MCF 10A (cell line): ENCODE measurements at regions of chr1 and their contacts with region 1.

Region 1: GRCh38 chr1:11979851-11980675 is at the start of gene MFN2:
- DNase-seq: peak; percentile 97
- H3K4me3 Mint-ChIP-seq: peak within 1 kb of the TSS; percentile 78
- H3K27ac Mint-ChIP-seq: peak within 1 kb of the TSS; percentile 99
- H3K4me1 Mint-ChIP-seq: peaks cover 29% of the 10 kb centered on the region
- H3K27me3 Mint-ChIP-seq: no peaks in the 10 kb centered on the region
- CTCF ChIP-seq: no peak
- total RNA-seq, gene MFN2: 95.6 and 105 TPM in 2 replicates

Region 2: DNA sequence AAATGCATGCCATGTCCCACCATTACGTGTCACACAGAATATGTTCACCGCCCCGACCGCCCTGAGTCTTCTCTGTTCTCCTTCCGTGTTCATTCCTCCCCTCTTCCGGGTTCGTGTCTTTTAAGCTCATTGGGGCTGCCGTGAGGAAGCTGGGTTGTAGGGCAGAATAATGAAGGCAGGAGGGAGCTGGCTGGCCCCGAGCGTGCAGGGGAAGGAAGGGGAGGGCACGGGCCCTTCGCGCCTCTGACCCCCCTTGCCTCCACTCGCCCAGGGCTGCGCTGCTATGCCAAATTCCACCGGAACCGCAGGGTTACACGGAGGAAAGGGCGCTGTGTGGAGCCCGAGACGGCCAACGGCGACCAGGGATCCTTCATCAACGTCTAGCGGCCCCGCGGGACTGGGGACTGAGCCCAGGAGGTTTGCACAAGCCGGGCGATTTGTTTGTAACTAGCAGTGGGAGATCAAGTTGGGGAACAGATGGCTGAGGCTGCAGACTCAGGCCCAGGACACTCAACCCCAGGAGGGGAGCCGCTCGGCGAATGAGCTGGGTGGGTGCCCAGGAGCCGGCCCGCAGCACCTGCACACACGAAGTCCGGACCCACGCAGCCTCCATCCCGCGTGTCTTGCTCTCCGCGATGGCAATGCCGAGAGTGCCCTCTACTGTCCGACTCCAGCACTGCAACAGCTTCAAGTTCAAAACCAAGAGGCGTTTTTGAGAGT is 260.6 kb before region 1 on chr1:
- CTCF ChIA-PET with region 1: no interaction called
- POLR2A ChIA-PET with region 1: no interaction called
- intact Hi-C with region 1: no loop called
- DNase-seq: peak; percentile 47
- H3K4me3 Mint-ChIP-seq: peak overlapping the region; percentile 53
- H3K27ac Mint-ChIP-seq: no peak overlapping the region
- H3K4me1 Mint-ChIP-seq: peaks cover 5% of the 10 kb centered on the region
- H3K27me3 Mint-ChIP-seq: no peaks in the 10 kb centered on the region
- CTCF ChIP-seq: peak; percentile 89

Region 3: DNA sequence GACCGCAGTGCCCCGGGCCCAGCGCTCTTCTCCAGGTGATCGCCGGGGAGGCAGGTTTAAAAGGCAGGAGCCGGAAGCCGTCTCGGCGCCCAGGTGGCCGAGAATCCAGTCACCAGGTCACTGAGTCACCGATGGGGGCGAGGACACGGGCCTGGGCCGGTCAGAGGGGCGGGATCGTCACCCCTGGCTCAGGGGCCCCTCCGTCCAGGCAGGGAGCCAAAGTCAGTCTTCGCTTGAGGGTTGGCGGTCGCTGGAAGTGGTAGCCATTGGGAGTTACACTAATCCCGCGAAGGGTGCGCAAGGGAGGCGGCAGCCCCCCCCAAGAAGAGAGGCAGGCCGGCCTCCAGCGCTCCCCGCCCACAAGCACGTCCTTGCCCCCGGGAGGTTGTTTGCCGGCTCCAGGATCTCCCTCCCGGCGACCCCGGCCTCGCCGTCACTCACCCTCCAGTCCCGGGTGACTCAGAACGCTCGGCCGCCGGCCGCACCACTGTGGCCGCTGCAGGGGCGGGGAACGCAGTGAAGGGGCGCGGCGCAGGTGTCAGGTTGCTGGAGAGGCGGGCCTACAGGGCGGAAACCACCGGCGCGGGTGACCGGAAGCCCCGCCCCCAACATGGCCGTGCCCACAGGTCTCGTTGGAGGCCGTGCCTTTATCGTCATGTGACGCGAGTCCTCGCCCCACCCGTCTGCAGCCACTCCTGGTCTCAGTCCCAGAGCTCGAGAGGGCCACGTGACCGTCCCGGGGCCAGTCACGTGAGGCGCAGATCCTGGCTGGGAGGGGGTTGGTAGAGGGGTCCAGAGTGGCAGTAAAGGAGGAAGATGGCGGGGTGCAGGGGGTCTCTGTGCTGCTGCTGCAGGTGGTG is 174.4 kb before region 1 on chr1 and contains the starts of genes CLCN6 and MTHFR:
- CTCF ChIA-PET with region 1: interaction called, 5 read pairs
- POLR2A ChIA-PET with region 1: interaction called, 16 read pairs
- intact Hi-C with region 1: no loop called
- DNase-seq: peak; percentile 99
- H3K4me3 Mint-ChIP-seq: peak within 1 kb of the TSS; percentile 95
- H3K27ac Mint-ChIP-seq: peak within 1 kb of the TSS; percentile 96
- H3K4me1 Mint-ChIP-seq: peaks cover 34% of the 10 kb centered on the region
- H3K27me3 Mint-ChIP-seq: no peaks in the 10 kb centered on the region
- CTCF ChIP-seq: no peak
- total RNA-seq, gene CLCN6: 12.3 and 24.7 TPM in 2 replicates
- total RNA-seq, gene MTHFR: 14.0 and 17.8 TPM in 2 replicates

Region 4: DNA sequence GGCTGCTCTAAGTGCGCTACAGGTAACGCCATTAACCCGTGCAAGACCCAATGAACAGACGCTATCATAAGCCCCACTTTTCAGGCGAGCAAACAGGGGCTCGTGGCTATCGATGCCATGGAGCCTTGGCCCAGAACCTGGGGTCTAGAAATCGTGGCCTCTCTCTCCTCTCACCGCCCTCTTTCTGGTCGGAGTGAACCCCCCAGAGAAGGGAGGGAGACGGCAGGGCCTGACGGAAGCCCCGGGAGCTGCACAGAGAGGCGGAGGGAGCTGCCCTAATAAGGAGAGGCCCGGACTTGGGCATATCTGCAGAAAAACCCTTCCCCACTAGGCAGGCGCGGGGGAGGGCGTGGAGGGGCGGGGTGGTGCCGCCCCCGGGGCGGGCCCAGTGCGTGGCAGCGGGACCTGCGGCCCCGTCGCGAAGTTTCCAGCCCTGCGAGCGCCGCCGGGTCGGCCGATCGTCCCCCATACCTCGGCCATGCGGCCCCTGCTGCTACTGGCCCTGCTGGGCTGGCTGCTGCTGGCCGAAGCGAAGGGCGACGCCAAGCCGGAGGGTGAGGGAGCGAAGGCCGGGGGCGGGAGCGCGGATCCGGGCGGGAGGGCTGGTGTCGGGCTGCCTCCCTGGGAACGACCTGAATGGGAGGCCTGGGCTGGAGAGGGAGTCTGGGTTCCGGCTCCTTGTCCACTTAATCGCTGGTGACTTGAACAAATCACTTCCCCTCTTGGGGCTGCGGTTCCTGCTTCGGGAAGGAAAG is 45.6 kb before region 1 on chr1 and contains the start of gene PLOD1:
- CTCF ChIA-PET with region 1: no interaction called
- POLR2A ChIA-PET with region 1: interaction called, 24 read pairs
- intact Hi-C with region 1: loop called (anchors 2 kb)
- DNase-seq: peak; percentile 81
- H3K4me3 Mint-ChIP-seq: peak within 1 kb of the TSS; percentile 74
- H3K27ac Mint-ChIP-seq: peak within 1 kb of the TSS; percentile 12
- H3K4me1 Mint-ChIP-seq: peaks cover 21% of the 10 kb centered on the region
- H3K27me3 Mint-ChIP-seq: no peaks in the 10 kb centered on the region
- CTCF ChIP-seq: no peak
- total RNA-seq, gene PLOD1: 47.2 and 48.2 TPM in 2 replicates

Region 5: GRCh38 chr1:11991969-11992676 is 12.1 kb after region 1 on chr1:
- CTCF ChIA-PET with region 1: no interaction called
- POLR2A ChIA-PET with region 1: interaction called, 33 read pairs
- intact Hi-C with region 1: no loop called
- DNase-seq: no peak
- H3K4me3 Mint-ChIP-seq: no peak overlapping the region
- H3K27ac Mint-ChIP-seq: no peak overlapping the region
- H3K4me1 Mint-ChIP-seq: no peaks in the 10 kb centered on the region
- H3K27me3 Mint-ChIP-seq: no peaks in the 10 kb centered on the region
- CTCF ChIP-seq: no peak

Region 6: GRCh38 chr1:12019858-12020509 is 39.9 kb after region 1 on chr1:
- CTCF ChIA-PET with region 1: no interaction called
- POLR2A ChIA-PET with region 1: interaction called, 31 read pairs
- intact Hi-C with region 1: loop called (anchors 2 kb)
- DNase-seq: no peak
- H3K4me3 Mint-ChIP-seq: peak overlapping the region; percentile 85
- H3K27ac Mint-ChIP-seq: peak overlapping the region; percentile 80
- H3K4me1 Mint-ChIP-seq: no peaks in the 10 kb centered on the region
- H3K27me3 Mint-ChIP-seq: no peaks in the 10 kb centered on the region
- CTCF ChIP-seq: no peak

Region 7: GRCh38 chr1:12037486-12038355 is 57.7 kb after region 1 on chr1:
- CTCF ChIA-PET with region 1: no interaction called
- POLR2A ChIA-PET with region 1: no interaction called
- intact Hi-C with region 1: no loop called
- DNase-seq: no peak
- H3K4me3 Mint-ChIP-seq: no peak overlapping the region
- H3K27ac Mint-ChIP-seq: no peak overlapping the region
- H3K4me1 Mint-ChIP-seq: no peaks in the 10 kb centered on the region
- H3K27me3 Mint-ChIP-seq: no peaks in the 10 kb centered on the region
- CTCF ChIP-seq: no peak

Region 8: DNA sequence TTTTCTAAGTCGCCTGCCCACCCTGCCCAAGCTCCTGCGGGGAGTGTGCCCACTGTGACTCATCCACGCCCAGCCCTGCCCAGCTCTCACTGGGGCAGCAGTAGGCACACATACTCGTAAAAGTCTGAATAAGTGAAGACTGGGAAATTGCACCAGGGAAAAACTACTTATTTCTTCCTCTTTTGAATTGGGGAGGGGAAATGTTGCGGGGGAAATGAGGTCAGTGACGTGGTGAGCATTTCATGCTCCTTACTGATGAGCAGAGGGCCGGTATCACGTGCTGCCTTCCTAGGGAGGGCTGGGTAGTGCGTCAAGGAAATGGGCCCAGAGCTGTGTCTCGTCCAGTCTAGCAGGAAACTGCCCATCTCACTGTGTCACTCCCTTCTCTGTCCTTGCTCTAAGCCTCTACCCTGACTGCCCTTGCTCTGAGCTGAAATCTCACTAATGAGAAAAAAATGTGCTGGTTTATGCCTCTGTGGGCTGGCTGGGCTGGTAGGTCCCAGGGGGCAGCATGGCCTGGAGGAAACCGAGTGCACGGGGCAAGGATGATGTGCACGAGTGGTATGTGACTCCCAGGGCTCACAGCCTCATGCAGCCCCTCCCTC is 173.2 kb after region 1 on chr1:
- CTCF ChIA-PET with region 1: no interaction called
- POLR2A ChIA-PET with region 1: no interaction called
- intact Hi-C with region 1: no loop called
- DNase-seq: no peak
- H3K4me3 Mint-ChIP-seq: no peak overlapping the region
- H3K27ac Mint-ChIP-seq: no peak overlapping the region
- H3K4me1 Mint-ChIP-seq: peaks cover 22% of the 10 kb centered on the region
- H3K27me3 Mint-ChIP-seq: peaks cover 10% of the 10 kb centered on the region
- CTCF ChIP-seq: no peak